ENCODE measurements at regions of chrX and their contacts with region 1.

Region 1: GRCh38 chrX:119693040-119693995 is at the start of gene SEPTIN6:
- H3K4me3 Mint-ChIP-seq: peak within 1 kb of the TSS; percentile 84
- H3K27ac Mint-ChIP-seq: peak within 1 kb of the TSS; percentile 90
- H3K4me1 Mint-ChIP-seq: peaks cover 16% of the 10 kb centered on the region
- H3K27me3 Mint-ChIP-seq: no peaks in the 10 kb centered on the region

Region 2: DNA sequence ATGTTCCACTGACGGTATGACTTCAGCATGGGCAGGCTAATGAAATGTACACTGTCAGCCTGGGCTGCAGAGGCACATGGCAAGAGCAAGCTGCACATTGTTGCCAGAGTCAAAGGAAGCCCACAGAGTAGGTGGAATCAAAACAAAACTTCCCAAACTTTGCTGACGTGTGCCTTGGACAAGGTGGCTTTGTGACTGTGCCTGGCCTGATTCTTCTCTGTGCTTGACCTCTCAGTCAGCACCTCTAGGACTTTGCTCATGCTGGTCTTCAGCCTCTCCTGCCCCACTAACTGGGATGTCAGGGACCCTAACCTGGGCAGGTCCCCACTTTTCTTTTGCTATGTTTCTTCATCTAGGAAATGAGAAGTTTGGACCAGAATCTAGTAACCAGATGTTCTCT is 525.2 kb before region 1 on chrX:
- intact Hi-C with region 1: no loop called
- H3K4me3 Mint-ChIP-seq: no peak overlapping the region
- H3K27ac Mint-ChIP-seq: no peak overlapping the region
- H3K4me1 Mint-ChIP-seq: no peaks in the 10 kb centered on the region
- H3K27me3 Mint-ChIP-seq: no peaks in the 10 kb centered on the region

Region 3: GRCh38 chrX:119606280-119607015 is 86.9 kb before region 1 on chrX and contains the start of gene NKRF:
- intact Hi-C with region 1: loop called (anchors 5 kb)
- H3K4me3 Mint-ChIP-seq: peak within 1 kb of the TSS; percentile 97
- H3K27ac Mint-ChIP-seq: peak within 1 kb of the TSS; percentile 86
- H3K4me1 Mint-ChIP-seq: peaks cover 17% of the 10 kb centered on the region
- H3K27me3 Mint-ChIP-seq: no peaks in the 10 kb centered on the region

Region 4: GRCh38 chrX:119775517-119776238 is 82.4 kb after region 1 on chrX:
- intact Hi-C with region 1: loop called (anchors 10 kb)
- H3K4me3 Mint-ChIP-seq: no peak overlapping the region
- H3K27ac Mint-ChIP-seq: peak overlapping the region; percentile 93
- H3K4me1 Mint-ChIP-seq: peaks cover 31% of the 10 kb centered on the region
- H3K27me3 Mint-ChIP-seq: no peaks in the 10 kb centered on the region